ENCODE measurements at regions of chr10 and their contacts with region 1.

Region 1: GRCh38 chr10:109883859-109884771 is 39.2 kb downstream of the XPNPEP1 start:
- DNase-seq: no peak
- H3K4me3 ChIP-seq: peak overlapping the region; percentile 3 to 27 (median 15)
- H3K27ac ChIP-seq: peak overlapping the region; percentile 40 to 73 (median 62)
- H3K4me1 ChIP-seq: peaks cover 10 to 31% (median 17%) of the 10 kb centered on the region in 4 donors
- H3K27me3 ChIP-seq: no peaks in the 10 kb centered on the region
- CTCF ChIP-seq: peak; percentile 93 to 95 (median 94)
- EP300 ChIP-seq: no peak
- POLR2A ChIP-seq: no peak

Region 2: DNA sequence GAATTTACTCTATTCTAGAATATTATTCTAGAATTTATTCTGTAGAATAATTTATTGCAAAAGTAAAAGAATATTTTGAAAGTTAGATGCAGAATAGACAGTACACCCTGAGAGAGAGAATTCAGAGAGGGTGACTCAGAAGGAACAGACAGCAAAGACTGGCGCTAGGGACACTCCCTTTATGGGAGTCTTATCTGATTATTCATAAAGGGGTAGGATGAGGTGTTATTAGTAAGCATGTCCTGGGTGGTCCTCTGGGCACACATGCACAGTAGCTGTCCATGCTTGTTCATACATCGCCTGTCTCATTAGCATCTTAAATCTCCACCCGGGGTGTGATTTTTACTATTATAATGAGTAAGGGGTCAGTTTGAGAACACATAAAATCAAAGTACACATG is 60.9 kb before region 1 on chr10:
- intact Hi-C with region 1: no loop called
- DNase-seq: peak; percentile 17
- H3K4me3 ChIP-seq: no peak overlapping the region
- H3K27ac ChIP-seq: no peak overlapping the region
- H3K4me1 ChIP-seq: no peaks in the 10 kb centered on the region
- H3K27me3 ChIP-seq: no peaks in the 10 kb centered on the region
- CTCF ChIP-seq: no peak
- EP300 ChIP-seq: no peak
- POLR2A ChIP-seq: no peak

Region 3: DNA sequence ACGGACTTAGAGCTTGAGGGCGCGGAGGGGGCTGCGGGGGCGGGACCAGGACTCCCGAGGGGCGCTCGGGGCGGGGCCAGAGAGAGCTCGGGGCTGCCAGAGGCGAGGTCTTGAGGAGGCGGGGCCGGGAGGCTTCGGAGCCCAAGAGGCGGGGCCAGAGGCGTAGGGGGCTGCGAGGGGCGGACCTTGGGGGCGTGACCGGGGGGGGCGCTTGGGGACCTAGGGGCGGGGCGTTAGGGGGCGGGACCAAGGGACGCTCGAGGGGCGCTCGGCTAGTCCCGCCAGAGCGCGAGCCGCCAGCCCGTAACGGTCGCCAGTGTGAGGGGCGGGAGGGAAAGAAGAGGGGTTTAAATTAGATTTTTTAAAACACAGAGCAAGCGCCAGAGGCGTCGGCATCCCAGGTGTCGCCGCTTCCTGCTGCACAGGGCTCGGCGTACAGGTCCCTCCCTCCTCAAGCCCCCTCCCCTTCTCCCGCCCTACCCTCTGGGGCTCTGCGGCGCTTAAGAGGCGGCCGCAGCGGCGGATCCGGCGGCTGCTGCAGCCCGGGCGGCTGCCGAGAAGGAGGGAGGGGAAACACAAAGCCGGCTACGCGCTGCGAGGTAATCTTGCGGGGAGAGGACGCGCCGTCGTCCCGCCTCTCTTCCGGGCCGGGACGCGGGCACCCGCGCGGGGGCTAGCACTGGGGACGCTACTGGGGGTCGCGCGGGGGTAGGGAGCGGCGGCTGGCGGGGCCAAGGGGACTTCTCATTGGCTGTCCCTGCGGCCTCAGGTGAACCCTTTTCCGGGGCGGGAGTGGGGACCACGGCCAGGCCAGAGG is 123.8 kb after region 1 on chr10 and contains the start of gene ADD3:
- intact Hi-C with region 1: loop called (anchors 5 kb)
- DNase-seq: peak; percentile 97
- H3K4me3 ChIP-seq: peak within 1 kb of the TSS; percentile 85 to 93 (median 91)
- H3K27ac ChIP-seq: peak within 1 kb of the TSS; percentile 89 to 96 (median 94)
- H3K4me1 ChIP-seq: peaks cover 40 to 62% (median 46%) of the 10 kb centered on the region in 4 donors
- H3K27me3 ChIP-seq: peaks cover 0 to 3% (median 0%) of the 10 kb centered on the region in 4 donors
- CTCF ChIP-seq: no peak
- EP300 ChIP-seq: no peak
- POLR2A ChIP-seq: peak; percentile 36
- total RNA-seq, gene ADD3: 60.1 to 228 (median 99.2) TPM

Region 4: GRCh38 chr10:110016039-110016438 is 131.9 kb after region 1 on chr10:
- intact Hi-C with region 1: loop called (anchors 2 kb)
- DNase-seq: no peak
- H3K4me3 ChIP-seq: no peak overlapping the region
- H3K27ac ChIP-seq: no peak overlapping the region
- H3K4me1 ChIP-seq: peaks cover 24 to 41% (median 37%) of the 10 kb centered on the region in 4 donors
- H3K27me3 ChIP-seq: no peaks in the 10 kb centered on the region
- CTCF ChIP-seq: peak in 1 of 3 experiments; percentile 15
- EP300 ChIP-seq: no peak
- POLR2A ChIP-seq: no peak

Region 5: GRCh38 chr10:110101464-110102144 is 217.5 kb after region 1 on chr10:
- intact Hi-C with region 1: loop called (anchors 10 kb)
- DNase-seq: no peak
- H3K4me3 ChIP-seq: no peak overlapping the region
- H3K27ac ChIP-seq: no peak overlapping the region
- H3K4me1 ChIP-seq: peaks cover 3 to 9% (median 4%) of the 10 kb centered on the region in 4 donors
- H3K27me3 ChIP-seq: no peaks in the 10 kb centered on the region
- CTCF ChIP-seq: no peak
- EP300 ChIP-seq: no peak
- POLR2A ChIP-seq: no peak

Region 6: GRCh38 chr10:110137142-110137545 is 253.0 kb after region 1 on chr10:
- intact Hi-C with region 1: loop called (anchors 10 kb)
- DNase-seq: peak; percentile 24
- H3K4me3 ChIP-seq: no peak overlapping the region
- H3K27ac ChIP-seq: peak overlapping the region; percentile 53 to 70 (median 58)
- H3K4me1 ChIP-seq: peaks cover 16 to 20% (median 18%) of the 10 kb centered on the region in 4 donors
- H3K27me3 ChIP-seq: no peaks in the 10 kb centered on the region
- CTCF ChIP-seq: peak; percentile 75 to 84 (median 83)
- EP300 ChIP-seq: no peak
- POLR2A ChIP-seq: no peak

Region 7: GRCh38 chr10:110210674-110211464 is 326.8 kb after region 1 on chr10:
- intact Hi-C with region 1: loop called (anchors 10 kb)
- DNase-seq: peak; percentile 99
- H3K4me3 ChIP-seq: peak overlapping the region; percentile 80 to 91 (median 86)
- H3K27ac ChIP-seq: peak overlapping the region; percentile 94 to 100 (median 98)
- H3K4me1 ChIP-seq: peaks cover 42 to 54% (median 53%) of the 10 kb centered on the region in 4 donors
- H3K27me3 ChIP-seq: no peaks in the 10 kb centered on the region
- CTCF ChIP-seq: no peak
- EP300 ChIP-seq: peak; percentile 47
- POLR2A ChIP-seq: peak; percentile 64

Region 8: DNA sequence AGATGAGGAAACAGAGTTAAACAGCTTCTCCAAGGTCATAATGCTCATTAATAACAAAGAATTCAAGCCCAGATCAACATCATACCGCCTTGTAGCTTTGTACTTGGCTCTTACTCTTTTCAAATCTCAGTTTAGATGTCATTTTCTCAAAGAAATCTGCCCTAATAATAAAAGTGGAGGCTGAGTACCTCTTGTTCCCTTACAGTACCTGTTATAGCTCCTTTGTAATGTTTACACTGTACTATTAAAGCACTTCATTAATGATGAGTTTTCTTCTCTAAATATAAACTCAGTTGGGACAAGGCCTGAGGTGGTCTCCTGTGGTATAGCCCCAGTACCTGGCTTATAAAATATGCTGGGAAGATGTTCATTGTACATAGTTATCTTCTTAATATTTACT is 412.9 kb after region 1 on chr10:
- intact Hi-C with region 1: loop called (anchors 10 kb)
- DNase-seq: no peak
- H3K4me3 ChIP-seq: no peak overlapping the region
- H3K27ac ChIP-seq: peak overlapping the region in 3 of 4 donors; percentile 7 to 69 (median 40)
- H3K4me1 ChIP-seq: peaks cover 24 to 61% (median 57%) of the 10 kb centered on the region in 4 donors
- H3K27me3 ChIP-seq: no peaks in the 10 kb centered on the region
- CTCF ChIP-seq: no peak
- EP300 ChIP-seq: no peak
- POLR2A ChIP-seq: no peak